ENCODE measurements at regions of chr1 and their contacts with region 1.

Region 1: DNA sequence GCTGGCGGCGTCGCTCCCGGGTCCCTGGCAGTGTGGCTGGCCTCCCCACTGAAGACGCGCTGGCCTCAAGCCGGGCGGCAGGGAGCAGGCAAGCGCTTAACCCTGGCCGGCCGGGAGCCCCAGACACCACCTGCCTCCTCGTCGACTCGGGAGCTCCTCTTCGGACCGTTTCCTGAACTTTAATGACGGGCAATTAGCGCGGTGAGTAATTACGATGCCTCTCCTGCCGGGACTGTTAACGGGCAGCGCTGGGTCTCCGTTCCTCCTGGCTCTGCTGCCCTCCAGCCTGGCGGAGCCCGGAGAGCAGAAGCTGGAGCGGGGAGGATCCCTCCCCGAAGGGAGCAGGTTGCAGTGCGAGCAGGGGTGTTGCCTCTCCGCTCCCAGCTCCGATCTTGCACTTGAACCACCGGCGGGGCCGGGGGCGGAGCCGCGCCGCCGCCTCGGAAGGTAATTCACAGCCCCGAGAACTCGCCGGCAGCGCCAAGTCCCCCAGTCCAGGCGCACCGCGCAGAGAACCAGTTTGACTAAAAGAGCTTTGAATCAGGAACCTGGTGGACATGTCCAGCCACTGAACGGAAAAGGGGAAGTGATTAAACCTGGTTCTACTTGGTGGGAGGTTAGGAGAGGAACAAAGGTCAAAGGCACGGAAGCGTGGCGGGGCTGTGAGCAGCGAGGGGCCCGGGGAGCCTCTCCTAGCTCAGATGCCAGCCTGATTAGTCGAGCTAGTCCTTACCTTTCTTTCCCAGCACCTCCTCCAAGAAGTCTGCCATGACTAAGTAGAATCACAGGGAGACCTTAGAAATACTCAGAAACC is 18.3 kb upstream of the PLEKHA6 start:
- DNase-seq: peak; percentile 75 to 79
- H3K4me3 ChIP-seq: peak overlapping the region; percentile 77
- H3K27ac ChIP-seq: peak overlapping the region; percentile 82
- H3K4me1 ChIP-seq: peaks cover 60% of the 10 kb centered on the region
- H3K27me3 ChIP-seq: no peaks in the 10 kb centered on the region
- CTCF ChIP-seq: peak; percentile 23; the same call in 1 of the 2 replicates

Region 2: GRCh38 chr1:204398217-204399081 is 20.4 kb after region 1 on chr1:
- CTCF ChIA-PET with region 1: interaction called, 12 read pairs
- POLR2A ChIA-PET with region 1: no interaction called
- intact Hi-C with region 1: loop called (anchors 1 kb)
- DNase-seq: peak; percentile 88 to 92
- H3K4me3 ChIP-seq: no peak overlapping the region
- H3K27ac ChIP-seq: no peak overlapping the region
- H3K4me1 ChIP-seq: 0 out of 2 replicates have a peak, but pooled peaks cover 5% of the 10 kb centered on the region
- H3K27me3 ChIP-seq: no peaks in the 10 kb centered on the region
- CTCF ChIP-seq: peak; percentile 87

Region 3: GRCh38 chr1:204438628-204439027 is 60.6 kb after region 1 on chr1:
- CTCF ChIA-PET with region 1: no interaction called
- POLR2A ChIA-PET with region 1: no interaction called
- intact Hi-C with region 1: loop called (anchors 2 kb)
- DNase-seq: peak; percentile 77 to 99
- H3K4me3 ChIP-seq: peak overlapping the region; percentile 13; the same call in 1 of the 2 replicates
- H3K27ac ChIP-seq: peak overlapping the region; percentile 89
- H3K4me1 ChIP-seq: peaks cover 90% of the 10 kb centered on the region
- H3K27me3 ChIP-seq: no peaks in the 10 kb centered on the region
- CTCF ChIP-seq: no peak

Region 4: GRCh38 chr1:204477036-204477740 is 99.2 kb after region 1 on chr1:
- CTCF ChIA-PET with region 1: no interaction called
- POLR2A ChIA-PET with region 1: no interaction called
- intact Hi-C with region 1: no loop called
- DNase-seq: no peak
- H3K4me3 ChIP-seq: no peak overlapping the region
- H3K27ac ChIP-seq: no peak overlapping the region
- H3K4me1 ChIP-seq: peaks cover 35% of the 10 kb centered on the region
- H3K27me3 ChIP-seq: no peaks in the 10 kb centered on the region
- CTCF ChIP-seq: no peak

Measured in PC-9 (cell line).